Esophagus squamous epithelium (tissue), 5 donors: ENCODE measurements at regions of chr10 and their contacts with region 1.

Region 1: GRCh38 chr10:19922236-19922963 is 106.2 kb downstream of the PLXDC2 start:
- DNase-seq: no peak
- H3K4me3 ChIP-seq: no peak overlapping the region
- H3K27ac ChIP-seq: peak overlapping the region; percentile 70 to 88 (median 83)
- H3K4me1 ChIP-seq: peaks cover 13 to 68% (median 38%) of the 10 kb centered on the region in 3 donors
- H3K27me3 ChIP-seq: no peaks in the 10 kb centered on the region
- CTCF ChIP-seq: no peak
- POLR2A ChIP-seq: no peak

Region 2: GRCh38 chr10:19833170-19833824 is 89.1 kb before region 1 on chr10:
- intact Hi-C with region 1: loop called (anchors 10 kb)
- DNase-seq: no peak
- H3K4me3 ChIP-seq: no peak overlapping the region
- H3K27ac ChIP-seq: peak overlapping the region; percentile 47 to 78 (median 66)
- H3K4me1 ChIP-seq: peaks cover 0 to 72% (median 12%) of the 10 kb centered on the region in 3 donors
- H3K27me3 ChIP-seq: no peaks in the 10 kb centered on the region
- CTCF ChIP-seq: no peak
- POLR2A ChIP-seq: no peak

Region 3: DNA sequence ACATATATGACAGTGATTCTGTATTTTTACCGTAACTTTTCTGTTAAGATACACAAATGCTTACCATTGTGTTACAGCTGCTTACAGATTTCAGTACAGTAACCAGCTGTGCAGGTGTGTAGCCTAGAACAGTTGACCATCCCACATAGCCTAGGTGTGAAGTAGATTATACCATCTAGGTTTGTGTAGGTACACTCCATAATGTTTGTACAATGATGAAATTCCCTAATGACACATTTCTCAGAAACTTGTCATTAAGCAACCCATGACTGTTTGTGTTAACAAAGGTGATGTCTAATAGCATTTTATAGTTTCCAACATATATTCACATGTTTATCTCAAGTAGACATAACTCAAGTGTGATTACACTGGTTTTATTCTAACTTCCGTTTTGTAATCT is 112.3 kb after region 1 on chr10:
- intact Hi-C with region 1: no loop called
- DNase-seq: no peak
- H3K4me3 ChIP-seq: no peak overlapping the region
- H3K27ac ChIP-seq: no peak overlapping the region
- H3K4me1 ChIP-seq: no peaks in the 10 kb centered on the region
- H3K27me3 ChIP-seq: no peaks in the 10 kb centered on the region
- CTCF ChIP-seq: no peak
- POLR2A ChIP-seq: no peak